Naive thymus-derived CD4-positive, alpha-beta T cell (primary cell): ENCODE measurements at regions of chr16 and their contacts with region 1.

Region 1: GRCh38 chr16:14600164-14600563 is 29.9 kb downstream of the PARN start:
- DNase-seq: peak in 4 of 9 donors; percentile 8 to 30 (median 18)
- ATAC-seq: no peak
- H3K4me3 ChIP-seq: no peak overlapping the region
- H3K4me3 Mint-ChIP-seq: no peak overlapping the region
- H3K27ac ChIP-seq: no peak overlapping the region
- H3K27ac Mint-ChIP-seq: no peak overlapping the region
- H3K4me1 ChIP-seq: no peaks in the 10 kb centered on the region
- H3K4me1 Mint-ChIP-seq: peaks cover 0 to 6% (median 3%) of the 10 kb centered on the region in 7 donors
- H3K27me3 ChIP-seq: no peaks in the 10 kb centered on the region
- H3K27me3 Mint-ChIP-seq: no peaks in the 10 kb centered on the region

Region 2: DNA sequence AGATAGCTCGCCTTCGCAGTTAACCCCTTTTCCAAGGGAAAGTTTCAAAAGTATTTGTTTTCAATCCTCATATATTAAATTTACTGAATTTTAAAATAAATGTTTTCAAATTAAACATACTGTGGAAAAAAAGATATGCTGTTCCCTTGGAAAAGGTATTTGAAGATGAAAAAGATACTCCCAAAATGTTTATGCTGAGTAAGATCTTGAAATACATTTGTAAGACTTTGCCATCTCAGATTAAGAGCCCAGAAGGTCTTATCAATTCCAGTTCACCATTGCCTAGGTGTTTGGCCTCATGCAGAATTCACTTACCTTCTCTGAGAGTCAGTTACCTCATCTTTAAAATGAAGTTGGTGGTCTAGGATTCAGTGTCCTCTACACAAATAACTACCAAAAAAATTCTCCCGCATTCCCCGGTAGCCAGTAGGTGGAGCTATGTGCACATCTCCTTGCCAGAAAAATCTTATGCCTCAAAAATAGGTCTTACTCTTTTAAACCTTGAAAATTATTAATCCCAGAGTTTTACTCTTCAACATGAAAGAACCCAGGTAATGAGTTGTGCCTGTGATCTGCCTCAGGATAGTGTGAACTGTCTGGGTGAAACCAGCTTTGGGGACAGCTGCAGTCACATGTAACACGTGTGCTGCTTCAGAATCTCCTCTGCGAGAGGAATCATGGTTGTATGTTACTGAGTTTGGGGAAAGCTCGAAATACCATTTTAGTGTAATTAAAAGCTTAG is 350.7 kb before region 1 on chr16:
- CTCF ChIA-PET with region 1: interaction called, 4 read pairs
- POLR2A ChIA-PET with region 1: no interaction called
- intact Hi-C with region 1: loop called (anchors 1 kb)
- DNase-seq: peak in 8 of 9 donors; percentile 25 to 66 (median 49)
- ATAC-seq: peak; percentile 59
- H3K4me3 ChIP-seq: no peak overlapping the region
- H3K4me3 Mint-ChIP-seq: no peak overlapping the region
- H3K27ac ChIP-seq: no peak overlapping the region
- H3K27ac Mint-ChIP-seq: no peak overlapping the region
- H3K4me1 ChIP-seq: no peaks in the 10 kb centered on the region
- H3K4me1 Mint-ChIP-seq: no peaks in the 10 kb centered on the region
- H3K27me3 ChIP-seq: no peaks in the 10 kb centered on the region
- H3K27me3 Mint-ChIP-seq: no peaks in the 10 kb centered on the region